Activated CD4-positive, alpha-beta T cell treated with anti-CD3 and anti-CD28 coated beads, Interleukin-2, amount 10 ng/mL, durations not matched to agents 24 days and 14 days (primary cell): ENCODE measurements at regions of chr10 and their contacts with region 1.

Region 1: GRCh38 chr10:88835096-88835909 is 16.3 kb downstream of the ANKRD22 start:
- DNase-seq: peak; percentile 96
- H3K4me3 Mint-ChIP-seq: no peak overlapping the region
- H3K27ac Mint-ChIP-seq: no peak overlapping the region
- H3K4me1 Mint-ChIP-seq: peaks cover 31% of the 10 kb centered on the region
- H3K27me3 Mint-ChIP-seq: no peaks in the 10 kb centered on the region

Region 2: GRCh38 chr10:88820748-88821389 is 14.4 kb before region 1 on chr10:
- intact Hi-C with region 1: loop called (anchors 1 kb)
- DNase-seq: no peak
- H3K4me3 Mint-ChIP-seq: no peak overlapping the region
- H3K27ac Mint-ChIP-seq: no peak overlapping the region
- H3K4me1 Mint-ChIP-seq: peaks cover 19% of the 10 kb centered on the region
- H3K27me3 Mint-ChIP-seq: peaks cover 10% of the 10 kb centered on the region

Region 3: GRCh38 chr10:88848499-88848898 is 13.2 kb after region 1 on chr10:
- intact Hi-C with region 1: loop called (anchors 1 kb)
- DNase-seq: no peak
- H3K4me3 Mint-ChIP-seq: peak overlapping the region; percentile 22
- H3K27ac Mint-ChIP-seq: peak overlapping the region; percentile 69
- H3K4me1 Mint-ChIP-seq: peaks cover 21% of the 10 kb centered on the region
- H3K27me3 Mint-ChIP-seq: peaks cover 15% of the 10 kb centered on the region

Region 4: GRCh38 chr10:88865281-88865876 is 30.1 kb after region 1 on chr10:
- intact Hi-C with region 1: loop called (anchors 2 kb)
- DNase-seq: no peak
- H3K4me3 Mint-ChIP-seq: no peak overlapping the region
- H3K27ac Mint-ChIP-seq: no peak overlapping the region
- H3K4me1 Mint-ChIP-seq: peaks cover 3% of the 10 kb centered on the region
- H3K27me3 Mint-ChIP-seq: peaks cover 27% of the 10 kb centered on the region

Region 5: DNA sequence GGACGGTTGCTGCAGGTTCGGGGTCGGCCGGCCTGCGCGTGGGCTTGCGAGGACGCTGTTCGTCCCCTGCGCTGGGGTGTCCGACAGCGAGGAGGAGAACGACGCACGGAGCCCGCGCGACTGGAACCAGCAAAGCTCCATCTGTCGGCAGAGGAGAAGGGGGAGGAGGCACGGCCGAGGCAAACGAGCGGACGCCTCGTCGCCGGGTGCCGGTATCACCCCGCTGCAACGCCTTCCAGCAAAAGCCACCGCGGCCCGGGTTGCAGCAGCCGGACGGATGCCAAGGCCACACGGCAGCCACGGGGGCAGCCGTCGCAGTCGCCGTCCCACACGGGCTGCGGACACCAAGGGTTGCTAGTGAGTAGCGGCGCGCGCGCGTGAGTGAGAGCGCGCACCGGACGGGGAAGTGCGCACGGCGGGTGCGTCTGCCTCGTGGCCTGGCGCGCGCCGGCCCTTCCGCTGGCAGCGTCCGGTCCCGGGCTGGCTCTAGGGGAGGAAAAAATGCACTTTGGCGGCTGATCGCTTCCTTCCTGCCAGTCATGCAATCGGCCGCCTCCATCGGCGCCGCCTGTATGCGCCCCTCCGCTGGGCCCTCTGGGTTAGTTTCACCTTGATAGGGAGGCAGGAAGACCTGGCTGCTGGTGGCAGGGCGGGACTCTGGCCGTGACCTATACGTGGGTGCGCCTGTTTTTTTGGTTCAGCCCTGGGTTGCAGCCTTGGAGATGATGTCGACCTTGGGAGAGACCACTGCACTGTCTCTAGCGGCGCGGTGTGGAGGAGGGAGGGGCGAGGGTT is 45.2 kb after region 1 on chr10:
- intact Hi-C with region 1: loop called (anchors 1 kb)
- DNase-seq: peak; percentile 92
- H3K4me3 Mint-ChIP-seq: peak overlapping the region; percentile 96
- H3K27ac Mint-ChIP-seq: peak overlapping the region; percentile 99
- H3K4me1 Mint-ChIP-seq: peaks cover 59% of the 10 kb centered on the region
- H3K27me3 Mint-ChIP-seq: no peaks in the 10 kb centered on the region

Region 6: DNA sequence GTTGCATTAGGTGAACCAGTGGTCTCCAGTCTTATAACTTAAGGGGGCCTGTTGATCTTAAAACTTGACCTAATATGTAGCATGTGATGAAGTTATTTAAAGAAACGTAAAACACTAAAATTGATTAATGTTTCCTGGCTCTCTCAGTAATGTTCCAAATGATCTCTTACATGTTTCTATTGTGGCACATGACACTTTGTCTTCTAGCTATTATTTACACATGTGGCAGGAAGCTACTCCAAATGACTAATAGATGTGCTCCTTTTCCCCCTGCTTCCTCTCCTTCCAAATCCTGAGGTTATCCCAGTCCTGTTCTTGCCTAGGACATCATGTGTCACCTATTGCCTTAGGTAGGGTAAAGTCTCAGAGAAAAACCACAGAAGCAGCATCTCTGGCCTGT is 244.7 kb after region 1 on chr10:
- intact Hi-C with region 1: loop called (anchors 5 kb)
- DNase-seq: no peak
- H3K4me3 Mint-ChIP-seq: no peak overlapping the region
- H3K27ac Mint-ChIP-seq: no peak overlapping the region
- H3K4me1 Mint-ChIP-seq: peaks cover 20% of the 10 kb centered on the region
- H3K27me3 Mint-ChIP-seq: peaks cover 12% of the 10 kb centered on the region

Region 7: DNA sequence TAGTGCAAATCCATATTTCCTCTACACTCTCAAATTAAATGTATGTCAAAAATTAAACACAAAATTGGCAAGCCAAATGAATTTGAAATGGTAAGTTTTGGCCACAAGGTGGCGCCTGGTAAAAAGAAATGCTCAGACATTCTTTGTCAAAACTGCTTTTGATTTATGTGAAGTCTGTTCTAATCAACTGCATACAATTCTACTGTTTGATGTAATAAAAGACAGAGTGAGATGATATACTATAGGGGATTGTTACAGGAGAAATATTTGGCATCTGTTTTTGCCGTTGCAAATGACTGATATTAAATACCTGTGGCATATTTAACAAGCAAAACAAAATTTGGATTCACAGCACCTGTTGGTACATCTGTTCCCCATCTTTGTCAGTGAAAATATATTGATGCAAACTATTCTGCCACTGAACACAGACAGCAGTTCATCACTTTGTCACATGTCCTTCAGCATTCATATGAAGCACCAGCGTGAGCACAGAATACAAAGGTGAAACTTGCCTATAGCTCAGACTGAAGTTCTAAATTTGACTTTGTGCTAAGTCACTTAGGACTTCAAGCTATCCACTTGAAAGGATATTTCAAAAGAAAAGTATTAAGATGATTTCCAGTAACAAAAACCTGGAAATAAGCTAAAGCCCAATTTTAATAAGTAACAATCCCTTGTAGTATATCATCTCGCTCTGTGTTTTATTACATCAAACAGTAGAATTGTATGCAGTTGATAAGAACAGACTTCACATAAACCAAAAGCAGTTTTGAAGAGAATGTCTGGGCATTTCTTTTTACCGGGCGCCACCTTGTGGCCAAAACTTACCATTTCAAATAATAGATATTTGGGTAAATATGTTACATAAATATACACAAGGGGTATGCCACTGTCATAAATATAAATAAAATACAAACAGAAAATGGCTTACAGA is 382.0 kb after region 1 on chr10:
- intact Hi-C with region 1: loop called (anchors 5 kb)
- DNase-seq: peak; percentile 89
- H3K4me3 Mint-ChIP-seq: no peak overlapping the region
- H3K27ac Mint-ChIP-seq: no peak overlapping the region
- H3K4me1 Mint-ChIP-seq: peaks cover 9% of the 10 kb centered on the region
- H3K27me3 Mint-ChIP-seq: peaks cover 2% of the 10 kb centered on the region